Heart left ventricle (tissue), 16 donors: ENCODE measurements at regions of chr16 and their contacts with region 1.

Region 1: GRCh38 chr16:72989579-72990551 is 58.1 kb downstream of the ZFHX3 start:
- DNase-seq: peak in 4 of 5 donors; percentile 33 to 74 (median 50)
- ATAC-seq: peak; percentile 42 to 72 (median 62)
- H3K4me3 ChIP-seq: peak overlapping the region in 5 of 12 donors; percentile 6 to 30 (median 12)
- H3K27ac ChIP-seq: peak overlapping the region; percentile 11 to 82 (median 68)
- H3K4me1 ChIP-seq: peaks cover 20 to 90% (median 68%) of the 10 kb centered on the region in 12 donors
- H3K27me3 ChIP-seq: no peaks in the 10 kb centered on the region
- CTCF ChIP-seq: no peak
- POLR2A ChIP-seq: no peak

Region 2: GRCh38 chr16:73020362-73020884 is 30.6 kb after region 1 on chr16:
- intact Hi-C with region 1: loop called in 1 of 10 experiments (anchors 5 kb)
- DNase-seq: peak; percentile 66 to 90 (median 80)
- ATAC-seq: peak; percentile 53 to 92 (median 76)
- H3K4me3 ChIP-seq: no peak overlapping the region
- H3K27ac ChIP-seq: peak overlapping the region in 9 of 12 donors; percentile 31 to 77 (median 52)
- H3K4me1 ChIP-seq: peaks cover 5 to 87% (median 37%) of the 10 kb centered on the region in 12 donors
- H3K27me3 ChIP-seq: no peaks in the 10 kb centered on the region
- CTCF ChIP-seq: no peak
- POLR2A ChIP-seq: no peak

Region 3: DNA sequence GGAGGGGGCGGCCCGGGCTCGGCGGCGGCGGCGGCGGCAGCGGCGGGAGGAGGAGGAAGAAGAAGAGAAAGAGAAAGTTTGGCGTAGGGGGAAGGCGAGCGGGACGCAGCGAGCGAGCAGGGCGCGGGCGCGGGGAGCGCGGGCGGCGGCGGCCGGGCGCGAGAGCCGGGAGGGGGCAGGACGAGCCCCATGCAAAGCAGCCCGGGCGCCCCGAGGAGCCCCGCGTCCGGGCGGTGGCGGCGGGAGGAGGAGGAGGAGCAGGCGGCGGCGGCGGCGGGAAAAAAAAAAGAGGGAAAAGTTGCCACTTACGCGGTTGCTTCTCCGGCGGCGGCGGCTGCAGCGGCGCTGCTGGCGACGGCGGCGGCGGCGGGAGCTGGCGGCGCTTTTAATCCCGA is 68.4 kb after region 1 on chr16:
- intact Hi-C with region 1: loop called in 2 of 10 experiments (anchors 1 to 5 kb)
- DNase-seq: peak; percentile 53 to 76 (median 54)
- ATAC-seq: peak in 2 of 4 donors; percentile 41 to 62
- H3K4me3 ChIP-seq: peak overlapping the region; percentile 57 to 94 (median 78)
- H3K27ac ChIP-seq: peak overlapping the region; percentile 85 to 98 (median 93)
- H3K4me1 ChIP-seq: peaks cover 0 to 56% (median 26%) of the 10 kb centered on the region in 12 donors
- H3K27me3 ChIP-seq: peaks cover 0 to 17% (median 5%) of the 10 kb centered on the region in 9 donors
- CTCF ChIP-seq: peak in 2 of 12 donors; percentile 16 to 31
- POLR2A ChIP-seq: no peak